ENCODE measurements at regions of chr2 and their contacts with region 1.

Region 1: GRCh38 chr2:231452799-231453508 is 11.3 kb downstream of the NCL start:
- DNase-seq: no peak
- H3K4me3 Mint-ChIP-seq: no peak overlapping the region
- H3K27ac Mint-ChIP-seq: peak overlapping the region; percentile 78
- H3K4me1 Mint-ChIP-seq: peaks cover 6% of the 10 kb centered on the region
- H3K27me3 Mint-ChIP-seq: no peaks in the 10 kb centered on the region

Region 2: GRCh38 chr2:231104115-231104713 is 348.7 kb before region 1 on chr2:
- CTCF ChIA-PET with region 1: interaction called, 14 read pairs
- DNase-seq: peak; percentile 73
- H3K4me3 Mint-ChIP-seq: no peak overlapping the region
- H3K27ac Mint-ChIP-seq: no peak overlapping the region
- H3K4me1 Mint-ChIP-seq: no peaks in the 10 kb centered on the region
- H3K27me3 Mint-ChIP-seq: no peaks in the 10 kb centered on the region

Region 3: GRCh38 chr2:231308631-231309428 is 144.1 kb before region 1 on chr2:
- CTCF ChIA-PET with region 1: no interaction called
- DNase-seq: no peak
- H3K4me3 Mint-ChIP-seq: no peak overlapping the region
- H3K27ac Mint-ChIP-seq: no peak overlapping the region
- H3K4me1 Mint-ChIP-seq: no peaks in the 10 kb centered on the region
- H3K27me3 Mint-ChIP-seq: peaks cover 21% of the 10 kb centered on the region

Region 4: GRCh38 chr2:231411831-231412617 is 40.9 kb before region 1 on chr2:
- CTCF ChIA-PET with region 1: interaction called, 15 read pairs
- DNase-seq: peak; percentile 69
- H3K4me3 Mint-ChIP-seq: no peak overlapping the region
- H3K27ac Mint-ChIP-seq: no peak overlapping the region
- H3K4me1 Mint-ChIP-seq: peaks cover 10% of the 10 kb centered on the region
- H3K27me3 Mint-ChIP-seq: peaks cover 72% of the 10 kb centered on the region

Region 5: DNA sequence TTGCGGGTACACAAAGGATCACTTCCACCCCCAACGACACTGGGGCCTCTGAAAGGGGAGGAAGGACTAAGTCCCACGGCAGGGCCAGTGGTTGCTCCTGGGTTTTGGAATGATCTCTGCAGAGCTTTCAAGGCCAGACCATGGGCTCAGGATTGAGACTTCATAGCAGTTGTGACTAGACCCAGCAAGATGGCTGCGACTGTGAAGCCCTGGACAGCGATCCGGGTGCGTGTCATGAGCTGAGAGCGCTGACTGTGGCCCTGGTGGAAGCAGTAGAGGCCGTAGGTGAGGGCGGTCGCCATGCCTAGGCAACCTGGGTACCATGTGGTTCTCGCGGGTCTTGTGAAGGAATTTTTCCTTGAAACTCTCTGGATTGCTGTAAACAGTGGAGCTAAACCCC is 16.0 kb before region 1 on chr2:
- CTCF ChIA-PET with region 1: interaction called, 10 read pairs
- DNase-seq: no peak
- H3K4me3 Mint-ChIP-seq: no peak overlapping the region
- H3K27ac Mint-ChIP-seq: no peak overlapping the region
- H3K4me1 Mint-ChIP-seq: peaks cover 7% of the 10 kb centered on the region
- H3K27me3 Mint-ChIP-seq: no peaks in the 10 kb centered on the region